Gastrocnemius medialis (tissue), 4 donors: ENCODE measurements at regions of chr9 and their contacts with region 1.

Region 1: DNA sequence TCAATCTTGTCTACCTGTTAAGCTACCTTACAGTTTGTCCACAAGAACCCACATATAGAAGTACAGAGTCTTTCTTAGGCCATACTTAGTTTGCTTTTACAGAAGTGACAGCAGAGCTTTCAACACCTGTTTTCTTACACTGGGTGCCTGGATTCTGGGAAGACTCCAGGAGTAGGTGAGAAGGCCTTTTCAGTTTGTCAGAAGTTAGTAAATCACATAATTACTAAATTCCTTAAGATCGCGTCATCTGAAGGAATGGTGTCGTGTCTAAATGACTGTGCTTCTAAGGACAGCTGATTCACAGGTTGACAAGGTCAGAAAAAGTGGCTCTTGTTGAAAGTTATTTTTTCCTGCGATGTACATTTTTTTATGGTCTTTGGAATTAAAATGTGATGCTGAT is 97.0 kb upstream of the FAM120A start:
- DNase-seq: no peak
- ATAC-seq: peak; percentile 61 to 77
- H3K4me3 ChIP-seq: no peak overlapping the region
- H3K27ac ChIP-seq: peak overlapping the region; percentile 51 to 83 (median 70)
- H3K4me1 ChIP-seq: peaks cover 0 to 13% of the 10 kb centered on the region in 2 donors
- H3K27me3 ChIP-seq: no peaks in the 10 kb centered on the region
- CTCF ChIP-seq: no peak
- POLR2A ChIP-seq: no peak

Region 2: GRCh38 chr9:93509084-93509483 is 154.6 kb after region 1 on chr9:
- in situ Hi-C with region 1: no loop called
- intact Hi-C with region 1: loop called (anchors 5 kb)
- DNase-seq: no peak
- ATAC-seq: no peak
- H3K4me3 ChIP-seq: no peak overlapping the region
- H3K27ac ChIP-seq: peak overlapping the region in 2 of 4 donors; percentile 69 to 80
- H3K4me1 ChIP-seq: peaks cover 47 to 73% of the 10 kb centered on the region in 2 donors
- H3K27me3 ChIP-seq: no peaks in the 10 kb centered on the region
- CTCF ChIP-seq: no peak
- POLR2A ChIP-seq: no peak